Right cardiac atrium (tissue), 5 donors: ENCODE measurements at regions of chr6 and their contacts with region 1.

Region 1: DNA sequence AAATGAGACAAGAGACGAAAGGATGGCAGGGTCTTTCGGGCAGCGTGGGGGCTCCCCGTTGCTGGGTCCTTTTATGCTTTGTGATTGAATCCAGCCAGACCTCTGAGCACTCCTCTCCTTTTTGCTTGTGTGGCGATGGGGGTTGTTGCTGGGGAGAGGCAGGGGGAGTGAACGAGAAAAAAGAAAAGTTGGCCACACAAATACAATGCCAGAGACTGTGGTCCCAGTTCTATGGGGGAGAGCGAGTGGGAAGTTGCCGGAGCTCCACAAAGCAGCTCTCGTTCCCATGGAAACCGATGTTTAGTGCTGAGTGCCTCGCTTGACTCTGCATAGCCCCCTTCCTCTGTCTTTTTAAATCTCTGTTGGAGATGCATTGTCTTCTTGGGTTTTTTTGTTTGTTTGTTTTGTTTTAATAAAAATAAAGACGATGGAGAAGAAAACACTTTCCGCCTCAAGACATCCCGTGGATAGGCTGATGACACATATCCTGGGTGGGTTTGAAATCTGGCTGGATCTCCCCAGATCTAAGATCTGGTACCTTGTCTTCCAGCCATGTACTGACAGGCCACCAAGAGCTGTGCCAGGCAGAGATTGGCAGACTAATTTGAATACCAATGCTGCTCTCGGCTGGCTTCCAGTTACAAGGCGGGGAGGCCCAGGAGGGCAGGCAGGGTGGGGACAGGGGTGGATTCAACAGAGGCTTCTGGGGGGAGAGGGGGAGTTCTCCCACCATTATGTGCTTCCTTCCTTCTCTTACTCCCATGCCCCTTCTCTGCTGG is 529.3 kb downstream of the QKI start:
- DNase-seq: peak in 2 of 3 donors; percentile 43 to 74
- ATAC-seq: peak; percentile 67 to 69
- H3K4me3 ChIP-seq: peak overlapping the region; percentile 1
- H3K27ac ChIP-seq: peak overlapping the region; percentile 36
- H3K4me1 ChIP-seq: peaks cover 7% of the 10 kb centered on the region
- H3K27me3 ChIP-seq: no peaks in the 10 kb centered on the region

Region 2: DNA sequence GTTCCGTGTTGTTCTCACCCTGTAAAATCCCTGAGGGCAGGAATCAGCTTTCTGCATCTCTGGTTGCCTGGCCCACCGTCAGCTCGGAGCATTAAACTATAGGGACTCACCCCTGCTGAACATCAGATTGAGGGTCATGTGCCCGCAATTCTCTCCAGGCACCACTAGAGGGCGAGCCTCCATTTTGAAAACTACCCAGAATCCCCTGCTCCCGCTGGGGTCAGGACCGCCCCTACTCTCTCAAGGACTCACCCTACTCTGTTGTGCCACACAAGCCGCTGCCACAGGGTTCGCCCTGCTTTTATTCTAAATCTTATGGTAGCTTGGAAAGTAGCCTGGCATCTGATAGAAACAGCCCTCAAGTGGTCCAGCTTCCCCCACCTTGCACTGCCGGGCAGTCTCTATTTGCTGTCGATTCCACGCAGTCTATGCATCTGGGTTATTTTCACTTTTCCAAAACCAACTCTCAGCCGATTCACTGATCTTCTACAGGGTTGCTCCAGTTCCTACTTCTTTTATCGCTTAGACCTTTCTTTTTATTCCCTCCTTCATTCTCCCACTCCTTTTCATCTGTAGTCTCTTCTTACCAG is 773.4 kb before region 1 on chr6:
- intact Hi-C with region 1: loop called in 1 of 4 experiments (anchors 10 kb)
- DNase-seq: no peak
- ATAC-seq: peak in 1 of 2 donors; percentile 46
- H3K4me3 ChIP-seq: no peak overlapping the region
- H3K27ac ChIP-seq: no peak overlapping the region
- H3K4me1 ChIP-seq: no peaks in the 10 kb centered on the region
- H3K27me3 ChIP-seq: no peaks in the 10 kb centered on the region